Posterior cingulate gyrus (tissue), 11 donors: ENCODE measurements at regions of chr17 and their contacts with region 1.

Region 1: DNA sequence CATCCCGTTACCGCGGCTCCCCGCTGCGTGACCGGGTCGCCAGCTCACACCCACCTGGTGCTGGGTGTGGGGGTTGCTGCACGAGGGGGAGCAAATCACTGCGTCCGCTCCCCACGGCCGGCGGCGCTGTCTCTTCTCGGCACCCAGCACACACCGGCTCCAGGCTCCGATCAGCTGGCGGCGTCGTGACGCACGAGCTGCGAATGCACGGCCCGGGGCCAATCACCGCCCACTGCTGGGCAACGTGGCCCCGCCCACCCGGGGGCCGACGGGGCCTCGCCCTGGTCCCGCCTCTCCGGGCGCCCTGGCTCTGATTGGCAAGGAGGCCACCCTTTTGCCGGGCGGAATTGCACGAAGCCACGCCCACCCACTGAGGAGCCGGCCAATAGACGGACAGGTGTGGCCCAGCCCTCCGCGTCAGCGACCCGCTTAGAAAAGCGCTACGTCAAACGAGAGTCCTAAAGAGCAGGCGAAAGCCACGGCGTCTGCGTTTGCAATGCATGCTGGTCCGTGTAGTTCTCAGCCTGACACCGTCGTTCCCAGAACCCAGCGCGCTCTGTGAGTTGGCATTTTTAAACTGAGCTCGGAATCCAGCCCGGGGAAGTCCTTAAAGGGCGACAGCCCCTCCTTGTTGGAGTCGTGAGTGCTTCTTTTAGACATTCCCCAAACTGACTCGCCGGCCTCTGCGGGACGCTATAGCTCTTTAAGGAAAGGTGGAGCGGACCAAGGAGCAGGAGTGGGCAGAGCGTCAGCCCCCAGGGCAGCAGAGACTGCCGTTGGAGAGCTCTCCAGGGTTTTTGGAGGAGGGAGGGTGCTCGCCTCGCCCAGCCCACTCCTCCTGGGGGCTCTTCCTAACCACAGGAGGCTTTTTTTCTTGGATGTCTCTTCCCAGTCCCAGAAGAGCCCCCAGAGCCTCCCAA is 6.2 kb upstream of the TLCD2 start:
- DNase-seq: peak; percentile 99 to 100 (median 100)

Region 2: DNA sequence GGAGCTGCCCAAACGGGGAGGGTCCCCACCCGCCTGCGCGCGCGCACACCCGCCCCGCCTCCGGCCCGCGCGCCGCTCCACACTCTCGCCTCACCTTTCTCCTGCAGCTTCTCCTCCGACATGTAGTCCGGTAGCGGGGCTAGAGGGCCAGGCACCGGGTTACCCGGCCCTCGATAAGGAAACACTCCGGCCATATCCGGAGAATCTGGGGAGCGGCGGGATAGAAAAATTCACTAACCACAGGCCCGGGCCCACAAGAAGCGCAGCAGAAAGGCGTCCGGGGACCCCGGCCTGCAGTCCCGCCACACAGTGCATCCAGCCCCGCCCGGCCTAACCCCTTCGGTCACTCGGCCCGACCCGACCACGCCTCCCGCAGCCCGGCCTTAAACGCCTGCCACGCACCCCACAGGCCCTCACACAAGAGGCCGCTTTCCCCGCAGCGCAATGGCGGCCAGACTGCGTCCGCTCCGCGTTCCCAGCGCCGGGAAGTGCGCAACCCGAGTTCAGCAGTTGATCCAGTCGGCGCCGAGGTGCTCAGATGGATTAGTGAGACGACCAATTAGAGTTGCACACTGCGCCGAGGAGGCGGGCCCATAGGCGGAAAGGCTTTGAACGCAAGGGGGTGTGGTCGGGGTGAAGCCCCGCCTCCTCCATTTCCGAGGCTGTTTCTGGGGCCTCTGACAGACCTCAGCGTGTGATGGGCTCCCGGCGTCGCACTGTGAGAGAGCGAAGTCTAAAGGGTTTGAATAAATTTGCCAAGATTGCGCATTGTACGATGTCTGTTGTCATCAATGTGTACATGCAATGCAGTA is 31.8 kb before region 1 on chr17 and contains the start of gene PRPF8:
- intact Hi-C with region 1: loop called (anchors 5 kb)
- DNase-seq: peak; percentile 96 to 100 (median 98)

Region 3: DNA sequence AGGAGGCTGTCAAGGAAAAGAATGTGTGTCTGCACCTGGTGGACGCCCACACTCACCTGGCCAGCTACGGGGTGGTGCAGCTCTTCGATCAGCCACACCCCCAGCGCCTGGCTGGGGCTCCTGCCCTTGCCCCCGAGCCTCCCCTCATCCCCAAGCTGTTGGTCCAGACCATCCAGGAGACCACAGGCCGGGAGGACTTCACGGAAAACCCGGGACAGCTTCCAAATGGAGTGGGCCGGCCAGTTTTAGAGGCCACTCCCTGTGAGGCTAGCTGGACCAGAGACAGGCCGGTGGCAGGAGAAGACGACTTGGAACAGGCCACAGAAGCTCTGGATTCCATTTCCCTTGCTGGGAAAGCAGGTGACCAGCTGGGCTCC is 10.3 kb after region 1 on chr17:
- intact Hi-C with region 1: no loop called
- DNase-seq: peak in 1 of 10 donors; percentile 58

Region 4: DNA sequence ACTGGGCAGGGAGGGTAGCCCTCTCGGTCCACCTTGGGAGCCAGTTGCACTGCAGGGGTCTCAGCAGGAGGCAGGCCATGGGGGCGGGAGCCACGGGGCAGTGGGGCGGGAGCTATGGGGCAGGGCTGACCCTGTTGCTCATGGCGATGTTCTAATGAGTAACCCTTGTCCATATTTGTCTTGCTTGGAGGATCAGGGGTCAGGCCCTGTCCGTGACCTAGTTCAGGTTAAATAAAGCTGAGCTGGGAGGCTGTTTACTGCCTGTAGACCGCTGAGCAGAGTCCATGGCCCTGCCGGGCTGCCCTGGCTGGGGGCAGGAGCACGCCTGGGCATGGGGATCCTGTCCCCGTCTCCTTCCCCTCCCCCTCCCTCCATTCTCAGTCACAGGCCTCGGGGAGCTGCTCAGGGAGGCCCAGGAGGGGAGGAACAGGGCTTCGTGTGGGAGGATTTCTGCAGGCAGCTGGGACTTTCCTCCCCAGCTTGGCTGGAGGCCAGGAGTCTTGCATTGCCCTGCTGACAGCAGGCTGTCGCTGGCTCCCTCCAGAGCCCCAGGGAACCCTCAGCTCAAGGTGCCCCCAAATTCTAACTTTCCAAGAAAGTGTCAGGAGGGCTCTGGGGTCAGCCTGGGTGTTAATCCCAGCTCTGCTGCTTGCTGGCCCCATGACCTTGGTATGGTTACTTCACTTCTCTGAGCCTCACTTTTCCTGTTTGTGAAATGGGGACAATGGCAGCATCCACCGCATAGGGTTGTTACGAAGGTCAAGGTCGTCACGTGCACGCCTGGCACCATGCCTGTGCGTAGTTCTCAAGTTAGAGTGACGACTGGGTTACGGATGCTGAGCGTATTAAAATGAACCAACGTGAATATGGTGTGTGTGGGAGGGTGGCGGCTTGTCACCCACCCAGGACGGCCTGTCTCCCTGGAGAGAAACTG is 20.3 kb after region 1 on chr17:
- intact Hi-C with region 1: no loop called
- DNase-seq: peak in 4 of 10 donors; percentile 56 to 91 (median 76)

Region 5: GRCh38 chr17:2029911-2030778 is 313.8 kb after region 1 on chr17 and contains the start of gene DPH1:
- intact Hi-C with region 1: loop called (anchors 10 kb)
- DNase-seq: peak; percentile 81 to 99 (median 90)